Activated CD4-positive, alpha-beta T cell treated with anti-CD3 and anti-CD28 coated beads, Interleukin-2, amount 10 ng/mL, durations not matched to agents 7 days and 5 days (primary cell): ENCODE measurements at regions of chr19 and their contacts with region 1.

Region 1: DNA sequence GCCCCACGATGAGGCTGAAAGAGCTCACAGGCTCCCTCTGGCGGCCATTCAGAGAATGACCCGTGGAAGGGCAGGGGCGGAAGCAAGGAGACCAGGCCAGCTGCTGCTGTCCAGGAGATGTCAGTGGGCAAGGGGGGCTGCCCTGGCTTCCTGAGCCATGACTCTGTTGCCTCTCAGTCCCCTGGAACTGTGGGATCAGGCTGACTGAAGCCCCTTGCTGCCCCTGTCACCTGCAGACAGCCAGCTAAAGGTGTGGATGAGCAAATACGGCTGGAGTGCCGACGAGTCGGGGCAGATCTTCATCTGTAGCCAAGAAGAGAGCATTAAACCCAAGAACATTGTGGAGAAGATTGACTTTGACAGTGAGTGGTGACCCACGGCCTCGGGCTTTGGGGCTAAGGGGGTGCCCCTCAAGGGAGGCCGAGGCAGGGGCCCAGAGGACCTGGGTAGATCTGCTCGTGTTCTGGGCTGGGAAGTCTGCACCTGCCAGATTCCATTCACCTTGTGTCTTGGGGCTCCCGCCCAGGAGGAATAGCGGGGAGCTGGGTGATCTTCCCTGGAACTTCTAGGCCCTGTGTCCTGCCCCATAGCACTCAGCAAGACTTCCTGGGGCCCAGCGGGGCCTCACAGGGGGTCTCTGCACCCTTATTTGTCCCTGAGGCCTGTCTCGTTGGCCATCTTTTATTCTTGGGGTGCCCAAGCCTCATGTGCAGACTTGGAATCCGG is 12.5 kb upstream of the ACTN4 start:
- DNase-seq: peak; percentile 79
- H3K4me3 Mint-ChIP-seq: no peak overlapping the region
- H3K27ac Mint-ChIP-seq: peak overlapping the region; percentile 78
- H3K4me1 Mint-ChIP-seq: peaks cover 44% of the 10 kb centered on the region
- H3K27me3 Mint-ChIP-seq: no peaks in the 10 kb centered on the region

Region 2: GRCh38 chr19:38452428-38453366 is 182.2 kb before region 1 on chr19:
- CTCF ChIA-PET with region 1: no interaction called
- POLR2A ChIA-PET with region 1: no interaction called
- DNase-seq: peak; percentile 12
- H3K4me3 Mint-ChIP-seq: no peak overlapping the region
- H3K27ac Mint-ChIP-seq: no peak overlapping the region
- H3K4me1 Mint-ChIP-seq: peaks cover 3% of the 10 kb centered on the region
- H3K27me3 Mint-ChIP-seq: no peaks in the 10 kb centered on the region

Region 3: GRCh38 chr19:38514812-38515633 is 119.9 kb before region 1 on chr19:
- CTCF ChIA-PET with region 1: interaction called, 14 read pairs
- POLR2A ChIA-PET with region 1: no interaction called
- DNase-seq: peak; percentile 81
- H3K4me3 Mint-ChIP-seq: no peak overlapping the region
- H3K27ac Mint-ChIP-seq: peak overlapping the region; percentile 77
- H3K4me1 Mint-ChIP-seq: peaks cover 41% of the 10 kb centered on the region
- H3K27me3 Mint-ChIP-seq: peaks cover 6% of the 10 kb centered on the region

Region 4: DNA sequence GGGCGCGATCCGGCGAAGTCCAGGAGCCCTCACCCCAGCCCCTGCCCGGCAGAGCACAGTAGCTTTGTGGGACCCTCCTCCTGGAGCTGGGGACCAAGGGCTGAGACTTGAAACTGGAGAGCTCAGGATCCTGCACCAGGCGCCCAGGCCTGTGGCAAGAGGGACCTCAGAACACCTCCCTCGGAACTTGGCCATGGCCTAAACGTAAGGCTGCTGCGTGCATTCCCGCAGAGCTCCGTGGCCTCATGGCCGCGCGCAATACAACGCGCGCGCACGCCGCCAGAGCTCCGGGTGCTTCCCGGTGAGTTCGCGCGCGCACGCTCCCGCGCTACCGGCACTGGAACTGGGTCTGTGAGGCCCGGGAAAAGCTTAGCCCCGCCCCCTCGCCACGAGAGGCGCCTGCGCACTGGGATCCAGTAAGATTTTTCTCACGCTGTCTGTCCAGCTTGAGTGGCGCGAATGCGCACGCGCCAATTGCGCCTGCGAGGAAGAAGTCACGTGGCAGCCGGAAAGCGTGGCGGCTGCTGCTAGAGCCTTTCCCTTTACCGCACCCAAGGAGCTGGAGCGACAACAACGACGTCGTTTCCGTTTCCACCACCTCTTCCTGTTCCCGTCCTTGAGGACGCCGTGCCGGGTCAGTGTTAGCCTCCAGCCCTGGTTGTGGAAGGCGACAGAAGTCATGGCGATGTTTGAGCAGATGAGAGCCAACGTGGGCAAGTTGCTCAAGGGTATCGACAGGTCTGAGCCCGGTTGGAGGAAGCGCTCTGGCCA is 16.1 kb before region 1 on chr19 and contains the start of gene EIF3K:
- CTCF ChIA-PET with region 1: interaction called, 22 read pairs
- POLR2A ChIA-PET with region 1: interaction called, 3 read pairs
- DNase-seq: peak; percentile 98
- H3K4me3 Mint-ChIP-seq: peak within 1 kb of the TSS; percentile 92
- H3K27ac Mint-ChIP-seq: peak within 1 kb of the TSS; percentile 92
- H3K4me1 Mint-ChIP-seq: peaks cover 50% of the 10 kb centered on the region
- H3K27me3 Mint-ChIP-seq: no peaks in the 10 kb centered on the region
- total RNA-seq, gene EIF3K: 309 to 318 TPM

Region 5: DNA sequence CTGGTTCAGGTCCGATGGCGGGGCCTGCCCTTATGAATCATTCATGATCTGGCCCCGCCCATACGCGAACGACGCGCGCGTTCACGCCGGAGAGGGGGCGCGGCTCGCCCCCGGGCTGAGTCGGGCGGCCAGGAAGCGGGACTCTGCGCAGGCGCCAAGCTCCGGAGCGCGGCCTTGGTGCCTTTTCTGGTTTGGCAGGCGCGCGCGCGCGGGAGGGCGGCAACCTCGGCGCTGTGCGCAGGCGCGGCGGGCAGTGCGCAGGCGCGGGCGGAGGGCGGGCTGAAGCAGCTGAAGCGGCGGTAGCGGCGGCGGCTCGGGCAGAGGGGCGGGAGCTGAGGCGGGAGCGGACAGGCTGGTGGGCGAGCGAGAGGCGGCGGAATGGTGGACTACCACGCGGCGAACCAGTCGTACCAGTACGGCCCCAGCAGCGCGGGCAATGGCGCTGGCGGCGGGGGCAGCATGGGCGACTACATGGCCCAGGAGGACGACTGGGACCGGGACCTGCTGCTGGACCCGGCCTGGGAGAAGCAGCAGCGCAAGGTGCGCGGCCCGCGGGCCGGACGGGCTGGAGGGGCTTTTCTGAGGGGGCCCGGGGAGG is 12.5 kb after region 1 on chr19 and contains the start of gene ACTN4:
- CTCF ChIA-PET with region 1: interaction called, 16 read pairs
- POLR2A ChIA-PET with region 1: no interaction called
- DNase-seq: peak; percentile 99
- H3K4me3 Mint-ChIP-seq: peak within 1 kb of the TSS; percentile 95
- H3K27ac Mint-ChIP-seq: peak within 1 kb of the TSS; percentile 86
- H3K4me1 Mint-ChIP-seq: peaks cover 50% of the 10 kb centered on the region
- H3K27me3 Mint-ChIP-seq: no peaks in the 10 kb centered on the region
- total RNA-seq, gene ACTN4: 337 to 354 TPM

Region 6: DNA sequence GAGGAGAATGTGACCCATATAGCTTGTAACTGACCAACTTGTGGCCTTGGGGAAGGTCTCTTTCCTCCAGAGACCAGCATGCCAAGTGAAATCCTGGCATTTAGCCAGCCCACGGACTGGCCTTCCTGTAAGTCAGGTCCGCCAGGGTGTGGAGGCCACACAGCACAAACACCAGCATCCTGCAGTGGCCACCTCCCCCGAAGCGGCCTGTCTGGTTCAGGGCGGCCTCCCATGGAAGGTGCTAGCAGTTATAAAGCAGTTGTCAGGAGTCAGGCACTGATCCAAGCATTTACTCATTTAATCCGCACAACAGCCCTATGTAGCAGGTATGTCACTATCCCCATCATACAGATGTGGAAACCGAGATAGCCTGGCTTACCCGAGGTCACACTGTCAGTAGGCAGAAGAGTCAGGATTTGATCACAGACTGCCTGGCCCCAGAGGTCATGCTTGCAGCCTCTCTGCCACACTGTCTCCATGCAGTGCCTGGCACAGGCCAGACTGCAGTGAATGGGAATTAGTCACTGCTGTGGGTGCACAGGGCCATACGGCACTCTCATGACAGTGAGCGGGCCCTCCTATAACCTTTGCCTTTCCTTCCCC is 72.7 kb after region 1 on chr19:
- CTCF ChIA-PET with region 1: no interaction called
- POLR2A ChIA-PET with region 1: no interaction called
- DNase-seq: no peak
- H3K4me3 Mint-ChIP-seq: no peak overlapping the region
- H3K27ac Mint-ChIP-seq: no peak overlapping the region
- H3K4me1 Mint-ChIP-seq: no peaks in the 10 kb centered on the region
- H3K27me3 Mint-ChIP-seq: no peaks in the 10 kb centered on the region

Region 7: DNA sequence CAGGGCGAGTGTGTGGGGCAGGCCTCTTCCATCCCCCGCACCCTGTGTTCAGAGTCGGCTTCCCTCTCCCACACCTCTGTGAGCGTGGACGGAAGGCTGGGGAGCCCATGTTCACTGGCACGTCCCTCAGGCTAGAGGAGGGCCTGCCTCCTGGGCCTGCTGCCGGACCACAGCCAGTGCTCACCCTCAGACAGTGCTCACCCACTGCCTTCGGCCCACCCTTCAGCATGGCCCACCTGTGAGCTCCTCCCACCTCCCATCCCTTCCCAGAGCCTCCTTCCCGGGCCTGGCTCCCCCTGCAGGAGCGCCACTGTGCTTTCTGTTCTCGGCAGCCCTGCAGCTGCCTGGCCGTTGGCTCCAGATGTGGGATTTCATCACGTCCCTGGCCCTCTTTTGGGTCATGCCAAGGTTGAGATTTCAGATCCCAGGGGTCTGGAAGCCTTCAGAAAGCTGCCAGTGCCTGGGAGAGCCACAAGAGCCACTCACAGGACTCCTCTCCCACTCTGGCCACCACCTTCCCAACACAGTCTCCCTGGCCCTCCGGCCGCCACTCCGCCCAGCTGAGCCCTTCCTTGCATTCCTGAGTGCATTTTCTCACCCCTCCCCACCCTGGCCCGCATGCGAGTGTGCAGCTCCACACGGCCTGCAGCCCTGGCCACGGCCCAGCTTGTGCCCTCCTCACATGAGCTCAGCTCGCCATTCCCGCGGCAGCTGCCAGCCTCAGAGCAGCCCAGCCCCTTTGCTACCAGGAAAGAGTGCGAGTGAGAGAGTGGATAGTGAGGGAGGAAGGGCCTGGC is 84.0 kb after region 1 on chr19:
- CTCF ChIA-PET with region 1: no interaction called
- POLR2A ChIA-PET with region 1: no interaction called
- DNase-seq: no peak
- H3K4me3 Mint-ChIP-seq: no peak overlapping the region
- H3K27ac Mint-ChIP-seq: no peak overlapping the region
- H3K4me1 Mint-ChIP-seq: no peaks in the 10 kb centered on the region
- H3K27me3 Mint-ChIP-seq: no peaks in the 10 kb centered on the region